Activated CD4-positive, alpha-beta memory T cell treated with anti-CD3 and anti-CD28 coated beads for 36 hours (primary cell): ENCODE measurements at regions of chr11 and their contacts with region 1.

Region 1: GRCh38 chr11:96342961-96343711 is at the start of gene MAML2:
- DNase-seq: peak; percentile 96
- H3K4me3 Mint-ChIP-seq: peak within 1 kb of the TSS; percentile 86
- H3K27ac Mint-ChIP-seq: peak within 1 kb of the TSS; percentile 95
- H3K4me1 Mint-ChIP-seq: peaks cover 26% of the 10 kb centered on the region
- H3K27me3 Mint-ChIP-seq: no peaks in the 10 kb centered on the region
- total RNA-seq, gene MAML2: 24.2 TPM

Region 2: DNA sequence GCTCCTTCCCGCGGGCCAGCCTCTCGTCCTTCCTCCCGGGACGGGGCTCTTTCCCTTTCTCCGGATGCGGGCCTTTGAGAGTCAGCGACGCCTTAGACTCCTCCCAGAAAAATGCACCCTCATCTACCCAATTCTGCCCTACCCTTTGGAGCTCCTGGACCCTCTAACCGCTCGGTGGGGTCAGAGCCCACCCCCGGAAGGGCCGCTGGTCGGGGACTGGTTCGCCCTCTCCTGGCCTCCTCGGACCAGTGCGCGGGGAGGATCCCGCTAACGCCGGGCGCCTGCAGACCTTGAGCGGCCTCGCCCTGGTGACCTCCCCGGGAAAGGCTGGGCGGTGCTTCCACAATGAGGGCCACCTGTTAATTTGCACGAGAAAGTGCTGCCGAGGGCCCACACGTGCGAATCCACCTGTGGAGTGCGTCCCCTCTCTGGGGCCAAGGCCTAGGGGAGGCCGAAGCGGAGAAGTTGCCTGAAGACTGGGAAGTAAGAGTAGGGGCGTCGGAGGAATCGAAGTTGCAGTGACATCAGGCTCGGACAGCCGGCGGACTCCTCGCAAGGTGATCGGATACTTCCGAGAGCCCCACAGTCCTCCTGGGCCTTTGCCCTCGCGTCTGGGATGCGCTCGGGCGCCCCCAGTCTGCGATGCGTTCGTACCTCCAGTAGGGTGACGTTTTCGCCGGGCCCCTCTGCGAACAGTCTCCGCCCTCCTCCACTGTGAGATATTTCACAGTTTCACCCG is 1192.0 kb before region 1 on chr11:
- CTCF ChIA-PET with region 1: no interaction called
- POLR2A ChIA-PET with region 1: no interaction called
- intact Hi-C with region 1: loop called (anchors 5 kb)
- DNase-seq: peak; percentile 95
- H3K4me3 Mint-ChIP-seq: peak overlapping the region; percentile 81
- H3K27ac Mint-ChIP-seq: peak overlapping the region; percentile 88
- H3K4me1 Mint-ChIP-seq: peaks cover 36% of the 10 kb centered on the region
- H3K27me3 Mint-ChIP-seq: no peaks in the 10 kb centered on the region

Region 3: DNA sequence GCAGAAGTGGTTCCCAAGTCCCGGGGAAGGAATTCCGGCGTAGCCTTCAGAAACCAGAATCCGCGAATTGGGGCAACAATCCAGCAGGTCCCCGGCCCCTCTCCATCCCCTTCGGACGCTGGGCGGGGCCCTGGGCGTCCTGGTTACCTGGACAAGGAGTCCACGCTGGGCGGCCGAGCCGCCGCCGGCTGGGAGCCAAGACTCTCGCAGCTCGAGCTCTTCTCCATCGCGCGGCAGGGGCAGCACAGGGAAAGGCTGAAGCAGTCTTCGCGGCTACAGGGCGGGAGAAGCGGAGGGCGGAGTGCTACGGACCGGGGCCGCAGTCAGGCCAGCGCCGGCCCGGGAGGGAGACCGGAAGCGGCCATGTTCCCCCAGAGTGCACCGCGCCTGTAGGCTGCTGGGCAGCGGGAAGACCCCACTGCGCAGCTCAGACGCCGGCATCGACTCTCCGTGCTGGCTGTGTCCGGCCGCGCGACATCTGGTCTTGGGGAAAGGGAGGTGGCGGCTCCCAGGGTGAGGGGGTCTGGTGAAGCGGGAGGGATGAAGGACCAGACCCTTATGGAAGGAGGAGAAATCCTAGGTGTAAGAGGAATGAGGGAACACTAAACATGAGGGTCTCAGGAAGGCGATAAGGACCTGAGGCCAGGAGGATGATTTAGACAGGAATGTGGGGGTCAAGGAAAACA is 419.3 kb before region 1 on chr11 and contains the start of gene MTMR2:
- CTCF ChIA-PET with region 1: interaction called, 3 read pairs
- POLR2A ChIA-PET with region 1: no interaction called
- intact Hi-C with region 1: loop called (anchors 1 kb)
- DNase-seq: peak; percentile 72
- H3K4me3 Mint-ChIP-seq: peak within 1 kb of the TSS; percentile 100
- H3K27ac Mint-ChIP-seq: peak within 1 kb of the TSS; percentile 99
- H3K4me1 Mint-ChIP-seq: peaks cover 30% of the 10 kb centered on the region
- H3K27me3 Mint-ChIP-seq: no peaks in the 10 kb centered on the region
- total RNA-seq, gene MTMR2: 36.9 to 37.8 TPM

Region 4: DNA sequence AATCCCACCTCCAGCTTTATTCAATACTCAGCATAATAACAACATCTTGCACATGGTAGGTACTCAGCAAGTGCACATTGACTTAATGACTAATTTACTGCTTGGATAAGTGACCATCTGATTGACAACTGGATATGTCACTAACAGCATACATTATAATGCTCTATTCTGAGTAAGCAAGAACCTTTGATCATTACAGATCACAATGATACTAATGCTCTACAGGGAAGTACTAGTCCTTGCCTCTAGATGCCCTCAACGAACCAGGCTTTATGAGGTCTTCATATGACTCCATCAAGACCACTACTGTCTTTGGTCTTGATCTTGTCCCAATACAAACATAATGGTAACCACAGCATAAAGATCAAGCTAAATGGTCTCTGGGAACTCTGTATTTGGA is 251.7 kb before region 1 on chr11:
- CTCF ChIA-PET with region 1: interaction called, 15 read pairs
- POLR2A ChIA-PET with region 1: no interaction called
- intact Hi-C with region 1: loop called (anchors 1 kb)
- DNase-seq: no peak
- H3K4me3 Mint-ChIP-seq: no peak overlapping the region
- H3K27ac Mint-ChIP-seq: peak overlapping the region; percentile 73
- H3K4me1 Mint-ChIP-seq: peaks cover 53% of the 10 kb centered on the region
- H3K27me3 Mint-ChIP-seq: no peaks in the 10 kb centered on the region

Region 5: DNA sequence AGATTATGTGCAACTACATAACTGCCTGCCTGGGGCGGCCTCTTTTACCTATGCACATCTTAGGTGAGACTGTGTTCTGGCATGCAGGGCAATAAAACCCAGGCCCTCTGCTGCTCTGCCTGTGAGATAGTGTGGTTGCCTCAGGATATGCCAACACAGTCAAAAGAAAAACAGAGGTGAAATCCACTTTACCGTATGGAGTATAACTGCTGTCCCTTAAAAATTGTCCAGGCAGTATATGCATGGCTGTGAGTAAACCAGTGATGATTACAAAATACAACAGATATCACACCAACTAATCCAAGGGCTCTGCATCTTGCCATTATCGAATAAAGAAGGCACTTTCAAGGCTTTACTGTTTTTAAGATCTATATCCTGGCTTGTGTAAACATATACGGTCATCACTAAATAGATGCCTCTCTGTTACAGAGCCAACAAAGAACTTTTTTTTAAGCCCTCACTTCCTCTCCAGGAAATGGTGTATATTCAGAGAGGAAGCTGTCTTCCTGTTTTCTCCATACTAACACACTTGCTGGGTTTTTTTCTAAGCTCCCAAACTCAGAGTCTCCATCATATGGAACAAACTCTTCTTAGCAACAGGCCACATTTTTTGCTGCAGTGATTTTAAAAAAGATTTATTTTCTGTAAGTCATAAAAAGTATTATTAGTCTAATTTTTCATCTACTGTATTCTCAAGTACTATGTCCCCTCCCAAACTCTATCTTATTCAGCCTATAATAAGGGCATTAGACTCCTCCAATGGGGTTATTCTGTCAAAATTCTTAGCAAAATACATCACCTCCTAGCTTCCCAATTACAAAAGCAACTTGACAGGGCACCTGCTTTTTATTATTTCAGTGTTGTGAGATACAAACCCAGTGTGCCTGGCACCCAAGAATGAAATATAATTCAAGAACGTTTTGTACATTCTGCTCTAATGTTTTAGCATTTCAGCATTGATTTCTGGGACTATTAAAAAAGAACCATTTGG is 135.4 kb before region 1 on chr11:
- CTCF ChIA-PET with region 1: interaction called, 25 read pairs
- POLR2A ChIA-PET with region 1: interaction called, 10 read pairs
- intact Hi-C with region 1: loop called (anchors 1 kb)
- DNase-seq: peak; percentile 44
- H3K4me3 Mint-ChIP-seq: peak overlapping the region; percentile 55
- H3K27ac Mint-ChIP-seq: peak overlapping the region; percentile 91
- H3K4me1 Mint-ChIP-seq: peaks cover 85% of the 10 kb centered on the region
- H3K27me3 Mint-ChIP-seq: no peaks in the 10 kb centered on the region

Region 6: DNA sequence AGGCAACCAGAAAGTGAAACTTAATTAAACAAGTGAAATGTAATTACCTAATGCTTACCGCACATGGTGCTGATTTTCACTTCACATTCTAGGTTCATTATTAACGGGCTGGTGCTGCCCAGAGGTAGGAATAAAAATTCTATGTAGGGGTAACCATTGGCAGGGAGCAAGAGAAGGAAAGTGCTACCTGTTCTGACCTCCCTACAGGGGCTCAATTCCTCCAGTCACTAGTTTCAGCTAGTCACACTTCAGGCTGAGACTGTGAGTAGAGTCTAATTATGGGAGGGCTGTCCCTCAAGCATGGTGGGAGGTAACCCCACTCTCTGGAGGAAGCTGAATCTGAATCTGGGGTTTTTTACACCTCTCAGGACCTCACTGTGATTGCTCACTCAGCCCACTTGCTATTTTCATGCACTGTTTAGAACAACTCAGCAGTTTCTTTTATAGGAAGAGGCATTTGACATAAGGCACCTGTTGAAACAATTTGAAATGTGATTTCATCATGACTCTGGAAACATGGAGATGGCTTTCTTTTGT is 75.6 kb before region 1 on chr11:
- CTCF ChIA-PET with region 1: interaction called, 16 read pairs
- POLR2A ChIA-PET with region 1: interaction called, 4 read pairs
- intact Hi-C with region 1: loop called (anchors 1 kb)
- DNase-seq: peak; percentile 71
- H3K4me3 Mint-ChIP-seq: peak overlapping the region; percentile 42
- H3K27ac Mint-ChIP-seq: peak overlapping the region; percentile 84
- H3K4me1 Mint-ChIP-seq: peaks cover 90% of the 10 kb centered on the region
- H3K27me3 Mint-ChIP-seq: no peaks in the 10 kb centered on the region

Region 7: DNA sequence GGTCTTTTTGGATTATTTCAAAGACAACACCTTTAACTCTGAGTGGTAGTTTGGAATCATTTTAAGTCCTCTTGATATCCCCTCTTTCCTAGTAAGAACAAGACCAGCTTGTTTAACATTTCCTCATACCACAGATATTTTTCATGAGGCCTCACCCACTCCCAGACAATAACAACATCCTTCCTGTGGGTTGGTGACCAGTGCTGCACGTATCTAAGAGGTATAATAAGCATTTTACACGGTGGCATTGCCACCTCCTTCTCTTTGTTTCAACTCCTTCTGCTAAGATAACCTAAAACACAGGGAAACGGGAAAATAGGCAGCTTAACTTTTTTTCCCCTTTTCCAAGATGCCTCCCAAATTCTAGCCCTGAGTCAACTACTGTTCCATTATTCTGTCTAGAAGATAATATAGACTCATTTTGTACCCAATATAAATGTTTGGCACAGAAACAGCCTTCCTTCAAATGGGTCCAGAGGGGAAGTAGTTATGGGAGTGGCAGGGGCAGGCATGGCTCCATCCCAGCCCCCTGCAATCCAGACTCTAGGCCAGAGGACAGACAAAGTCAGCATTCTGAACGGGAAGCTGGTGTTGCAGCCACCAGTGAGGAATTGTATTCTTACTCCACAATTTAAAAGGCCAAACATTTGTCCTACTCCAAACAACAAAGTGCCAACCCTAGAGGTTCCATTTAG is 28.7 kb before region 1 on chr11:
- CTCF ChIA-PET with region 1: interaction called, 5 read pairs
- POLR2A ChIA-PET with region 1: interaction called, 4 read pairs
- intact Hi-C with region 1: loop called (anchors 1 kb)
- DNase-seq: no peak
- H3K4me3 Mint-ChIP-seq: no peak overlapping the region
- H3K27ac Mint-ChIP-seq: peak overlapping the region; percentile 56
- H3K4me1 Mint-ChIP-seq: peaks cover 85% of the 10 kb centered on the region
- H3K27me3 Mint-ChIP-seq: no peaks in the 10 kb centered on the region

Region 8: GRCh38 chr11:96551136-96551535 is 208.0 kb after region 1 on chr11:
- CTCF ChIA-PET with region 1: no interaction called
- POLR2A ChIA-PET with region 1: no interaction called
- intact Hi-C with region 1: no loop called
- DNase-seq: no peak
- H3K4me3 Mint-ChIP-seq: no peak overlapping the region
- H3K27ac Mint-ChIP-seq: no peak overlapping the region
- H3K4me1 Mint-ChIP-seq: no peaks in the 10 kb centered on the region
- H3K27me3 Mint-ChIP-seq: no peaks in the 10 kb centered on the region